ENCODE measurements at regions of chr1 and their contacts with region 1.

Region 1: GRCh38 chr1:226827968-226828513 is 42.4 kb upstream of the PSEN2 start:
- DNase-seq: peak; percentile 78 to 97
- H3K4me3 ChIP-seq: no peak overlapping the region
- H3K27ac ChIP-seq: no peak overlapping the region
- H3K4me1 ChIP-seq: no peaks in the 10 kb centered on the region; a peak in 2 of 7 replicates
- H3K27me3 ChIP-seq: no peaks in the 10 kb centered on the region
- CTCF ChIP-seq: peak; percentile 91 to 96 (median 94)
- EP300 ChIP-seq: peak in 1 of 2 experiments; percentile 62; a peak in 1 of 3 replicates
- POLR2A ChIP-seq: no peak
- RAD21 ChIP-seq: peak; percentile 96 to 100

Region 2: DNA sequence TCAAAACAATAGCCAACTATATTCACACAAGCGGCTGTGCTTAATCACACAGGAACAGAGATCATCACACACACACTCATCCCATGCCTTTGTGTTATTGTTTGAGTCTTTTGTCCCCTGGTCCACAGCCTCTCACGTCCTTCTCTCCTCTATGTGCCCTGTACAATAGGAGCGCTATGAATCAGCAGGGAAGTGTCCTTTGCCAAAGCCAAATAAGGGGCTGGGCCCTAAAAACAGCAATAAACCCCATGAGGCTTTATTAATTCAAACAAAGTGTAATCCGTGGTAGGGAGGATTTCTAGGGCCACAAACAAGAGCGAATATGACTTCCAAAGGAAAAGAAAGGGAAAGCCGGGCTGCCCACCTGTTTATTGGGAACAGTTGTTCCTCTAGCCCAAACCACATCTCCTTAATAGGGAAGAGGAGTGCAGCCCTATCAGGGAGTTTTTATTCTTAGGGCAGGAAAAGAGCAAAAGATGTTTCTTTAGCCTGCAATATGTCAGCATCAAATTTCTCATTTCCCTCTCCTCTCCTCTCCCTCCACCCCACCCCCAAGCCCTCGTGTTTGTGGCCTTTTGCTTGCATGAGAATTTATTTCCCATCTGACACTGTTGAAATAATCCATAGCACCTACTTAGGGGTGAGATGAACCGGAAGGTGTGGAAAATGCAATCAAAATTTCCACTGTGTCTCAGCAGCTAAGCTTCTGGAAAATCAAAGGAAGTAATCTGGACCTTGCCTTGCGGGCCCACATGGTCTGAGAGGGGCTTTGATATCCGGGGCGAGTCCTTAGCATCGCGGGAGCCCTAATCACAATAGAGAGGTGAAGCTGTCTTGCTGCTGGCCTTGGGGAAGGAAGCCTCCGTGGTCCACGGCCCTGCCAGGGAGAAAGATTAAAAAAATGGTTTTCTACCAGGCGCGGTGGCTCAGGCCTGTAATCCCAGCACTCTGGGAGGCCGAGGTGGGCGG is 43.7 kb before region 1 on chr1:
- CTCF ChIA-PET with region 1: no interaction called
- POLR2A ChIA-PET with region 1: no interaction called
- DNase-seq: no peak
- H3K4me3 ChIP-seq: no peak overlapping the region
- H3K27ac ChIP-seq: no peak overlapping the region
- H3K4me1 ChIP-seq: peaks cover 0 to 2% (median 0%) of the 10 kb centered on the region in 4 experiments; a peak in 1 of 7 replicates
- H3K27me3 ChIP-seq: no peaks in the 10 kb centered on the region
- CTCF ChIP-seq: no peak
- EP300 ChIP-seq: no peak
- POLR2A ChIP-seq: no peak
- RAD21 ChIP-seq: no peak

Region 3: GRCh38 chr1:226797151-226797550 is 30.9 kb before region 1 on chr1:
- CTCF ChIA-PET with region 1: no interaction called
- POLR2A ChIA-PET with region 1: no interaction called
- DNase-seq: no peak
- H3K4me3 ChIP-seq: no peak overlapping the region
- H3K27ac ChIP-seq: no peak overlapping the region
- H3K4me1 ChIP-seq: no peaks in the 10 kb centered on the region
- H3K27me3 ChIP-seq: no peaks in the 10 kb centered on the region; a peak in 1 of 7 replicates
- CTCF ChIP-seq: no peak
- EP300 ChIP-seq: no peak
- POLR2A ChIP-seq: no peak
- RAD21 ChIP-seq: no peak

Region 4: GRCh38 chr1:226814751-226815496 is 13.1 kb before region 1 on chr1:
- CTCF ChIA-PET with region 1: interaction called, 19 read pairs
- POLR2A ChIA-PET with region 1: no interaction called
- DNase-seq: no peak
- H3K4me3 ChIP-seq: no peak overlapping the region
- H3K27ac ChIP-seq: no peak overlapping the region
- H3K4me1 ChIP-seq: peaks cover 0 to 3% (median 1%) of the 10 kb centered on the region in 4 experiments; a peak in 1 of 7 replicates
- H3K27me3 ChIP-seq: no peaks in the 10 kb centered on the region
- CTCF ChIP-seq: no peak
- EP300 ChIP-seq: no peak
- POLR2A ChIP-seq: no peak
- RAD21 ChIP-seq: no peak

Region 5: DNA sequence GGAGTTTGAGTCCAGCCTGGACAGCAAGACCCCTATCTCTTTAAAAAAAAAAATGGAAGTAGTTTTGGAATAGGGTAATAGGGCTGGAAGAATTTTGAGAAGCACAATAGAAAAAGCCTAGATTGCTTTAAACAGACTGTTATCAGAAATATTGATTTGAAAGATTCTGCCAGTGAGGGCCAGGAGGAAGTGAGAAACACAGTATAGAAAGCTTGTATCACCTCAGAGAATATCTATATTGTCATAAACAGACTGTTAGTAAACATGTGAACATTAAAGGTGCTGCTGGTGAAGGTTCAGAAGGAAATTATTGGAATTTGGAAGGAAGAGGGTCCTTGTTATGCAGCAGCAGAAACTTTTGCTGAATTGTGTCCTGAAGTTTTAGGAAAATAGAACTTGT is 17.6 kb after region 1 on chr1:
- CTCF ChIA-PET with region 1: interaction called, 16 read pairs
- POLR2A ChIA-PET with region 1: no interaction called
- DNase-seq: no peak
- H3K4me3 ChIP-seq: no peak overlapping the region
- H3K27ac ChIP-seq: no peak overlapping the region
- H3K4me1 ChIP-seq: peaks cover 0 to 5% (median 1%) of the 10 kb centered on the region in 4 experiments; a peak in 3 of 7 replicates
- H3K27me3 ChIP-seq: no peaks in the 10 kb centered on the region
- CTCF ChIP-seq: no peak
- EP300 ChIP-seq: no peak
- POLR2A ChIP-seq: no peak
- RAD21 ChIP-seq: no peak

Measured in H1 (cell line).